ENCODE measurements at regions of chr18 and their contacts with region 1.

Region 1: GRCh38 chr18:6885992-6886796 is 156.7 kb downstream of the ARHGAP28 start:
- DNase-seq: peak; percentile 55
- H3K4me3 ChIP-seq: no peak overlapping the region
- H3K27ac ChIP-seq: no peak overlapping the region
- H3K4me1 ChIP-seq: no peaks in the 10 kb centered on the region
- H3K27me3 ChIP-seq: no peaks in the 10 kb centered on the region
- CTCF ChIP-seq: peak; percentile 71

Region 2: GRCh38 chr18:5073026-5073944 is 1812.9 kb before region 1 on chr18:
- CTCF ChIA-PET with region 1: interaction called, 4 read pairs
- POLR2A ChIA-PET with region 1: no interaction called
- intact Hi-C with region 1: loop called (anchors 5 kb)
- DNase-seq: peak; percentile 68
- H3K4me3 ChIP-seq: no peak overlapping the region
- H3K27ac ChIP-seq: no peak overlapping the region
- H3K4me1 ChIP-seq: no peaks in the 10 kb centered on the region
- H3K27me3 ChIP-seq: no peaks in the 10 kb centered on the region
- CTCF ChIP-seq: peak; percentile 57

Region 3: GRCh38 chr18:5600378-5601071 is 1285.7 kb before region 1 on chr18:
- CTCF ChIA-PET with region 1: no interaction called
- POLR2A ChIA-PET with region 1: no interaction called
- intact Hi-C with region 1: loop called (anchors 2 kb)
- DNase-seq: peak; percentile 35
- H3K4me3 ChIP-seq: no peak overlapping the region
- H3K27ac ChIP-seq: no peak overlapping the region
- H3K4me1 ChIP-seq: no peaks in the 10 kb centered on the region
- H3K27me3 ChIP-seq: peaks cover 6% of the 10 kb centered on the region
- CTCF ChIP-seq: peak; percentile 49; the same call in 1 of the 2 replicates

Region 4: DNA sequence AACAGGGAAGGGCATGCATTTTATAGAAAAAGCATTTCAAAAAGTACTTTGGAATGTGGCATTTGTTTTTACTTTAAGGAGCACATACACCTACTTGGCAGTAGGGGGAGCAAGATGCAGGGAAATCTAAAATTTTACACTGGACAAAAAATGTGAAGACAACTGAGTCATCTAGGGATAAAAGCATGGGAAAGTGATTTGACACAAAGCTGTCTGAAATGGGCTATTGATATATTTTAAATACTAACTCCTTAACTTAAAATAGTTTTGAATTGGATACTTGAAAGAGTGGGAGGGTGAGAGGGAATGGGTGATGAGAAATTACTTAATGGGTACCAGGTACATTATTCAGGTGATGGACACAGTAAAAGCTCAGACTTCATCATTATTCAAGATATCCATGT is 1006.7 kb before region 1 on chr18:
- CTCF ChIA-PET with region 1: no interaction called
- POLR2A ChIA-PET with region 1: no interaction called
- intact Hi-C with region 1: loop called (anchors 2 kb)
- DNase-seq: peak; percentile 24
- H3K4me3 ChIP-seq: no peak overlapping the region
- H3K27ac ChIP-seq: no peak overlapping the region
- H3K4me1 ChIP-seq: no peaks in the 10 kb centered on the region
- H3K27me3 ChIP-seq: no peaks in the 10 kb centered on the region
- CTCF ChIP-seq: peak; percentile 72

Region 5: DNA sequence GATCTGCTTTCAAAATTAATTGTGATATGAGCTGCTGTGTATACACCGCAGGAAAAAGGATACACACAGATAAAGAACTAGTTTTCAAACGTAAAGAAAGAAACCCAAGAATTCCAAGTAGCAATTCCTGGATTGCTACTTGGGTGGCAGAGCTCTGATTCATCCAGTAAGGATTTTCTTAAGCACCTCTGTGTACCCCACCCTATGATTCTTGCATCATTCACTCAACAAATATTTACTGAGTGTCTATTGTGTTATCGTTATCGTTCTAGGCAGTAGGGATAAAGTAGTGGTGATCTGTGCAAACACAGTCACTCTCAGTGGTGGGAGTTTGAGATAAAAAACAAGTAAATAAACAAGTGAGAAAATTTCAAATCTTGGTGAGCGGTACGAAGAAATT is 985.9 kb before region 1 on chr18:
- CTCF ChIA-PET with region 1: no interaction called
- POLR2A ChIA-PET with region 1: no interaction called
- intact Hi-C with region 1: no loop called
- DNase-seq: no peak
- H3K4me3 ChIP-seq: no peak overlapping the region
- H3K27ac ChIP-seq: no peak overlapping the region
- H3K4me1 ChIP-seq: no peaks in the 10 kb centered on the region
- H3K27me3 ChIP-seq: peaks cover 22% of the 10 kb centered on the region
- CTCF ChIP-seq: no peak

Region 6: DNA sequence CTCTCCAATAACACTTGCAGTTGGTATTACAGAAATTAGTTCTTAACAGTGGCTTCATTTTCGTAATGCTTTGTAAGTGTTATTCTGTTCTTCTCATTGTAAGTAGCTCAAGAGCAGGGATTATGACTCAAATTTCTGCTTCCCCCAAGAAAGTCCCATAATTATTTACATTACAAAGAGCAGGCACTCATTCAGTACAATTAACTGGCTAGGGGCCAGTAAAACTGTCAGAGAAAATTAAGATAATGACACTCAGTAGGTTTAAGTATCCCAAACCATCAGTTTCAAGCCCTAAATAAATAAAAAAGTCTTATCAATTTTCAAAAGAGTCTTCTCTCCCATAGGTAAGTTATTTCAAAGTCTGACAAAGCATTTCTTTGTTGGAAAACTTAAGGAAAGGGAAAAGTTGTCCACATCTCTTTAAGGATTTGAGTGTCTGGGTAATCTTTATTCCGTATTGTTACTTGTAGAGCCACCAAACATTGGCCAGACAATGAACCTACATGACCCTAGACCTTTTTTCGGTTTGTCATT is 19.6 kb before region 1 on chr18:
- CTCF ChIA-PET with region 1: no interaction called
- POLR2A ChIA-PET with region 1: interaction called, 14 read pairs
- intact Hi-C with region 1: no loop called
- DNase-seq: no peak
- H3K4me3 ChIP-seq: no peak overlapping the region
- H3K27ac ChIP-seq: no peak overlapping the region
- H3K4me1 ChIP-seq: no peaks in the 10 kb centered on the region
- H3K27me3 ChIP-seq: no peaks in the 10 kb centered on the region
- CTCF ChIP-seq: no peak

Region 7: GRCh38 chr18:7303316-7304060 is 417.3 kb after region 1 on chr18:
- CTCF ChIA-PET with region 1: no interaction called
- POLR2A ChIA-PET with region 1: no interaction called
- intact Hi-C with region 1: no loop called
- DNase-seq: no peak
- H3K4me3 ChIP-seq: no peak overlapping the region
- H3K27ac ChIP-seq: no peak overlapping the region
- H3K4me1 ChIP-seq: no peaks in the 10 kb centered on the region
- H3K27me3 ChIP-seq: no peaks in the 10 kb centered on the region
- CTCF ChIP-seq: no peak

Measured in A673 (cell line).